AG04450 (cell line): ENCODE measurements at regions of chr2 and their contacts with region 1.

Region 1: GRCh38 chr2:166180951-166181812 is 53.4 kb upstream of the SCN1A start:
- DNase-seq: no peak
- H3K4me3 ChIP-seq: no peak overlapping the region
- H3K27ac ChIP-seq: no peak overlapping the region
- H3K27me3 ChIP-seq: no peaks in the 10 kb centered on the region
- CTCF ChIP-seq: peak; percentile 61

Region 2: GRCh38 chr2:165161510-165161909 is 1019.7 kb before region 1 on chr2:
- CTCF ChIA-PET with region 1: interaction called, 16 read pairs
- POLR2A ChIA-PET with region 1: no interaction called
- DNase-seq: peak; percentile 33
- H3K4me3 ChIP-seq: no peak overlapping the region
- H3K27ac ChIP-seq: no peak overlapping the region
- H3K27me3 ChIP-seq: no peaks in the 10 kb centered on the region
- CTCF ChIP-seq: no peak

Region 3: GRCh38 chr2:165911231-165911630 is 270.0 kb before region 1 on chr2:
- CTCF ChIA-PET with region 1: no interaction called
- POLR2A ChIA-PET with region 1: no interaction called
- DNase-seq: no peak
- H3K4me3 ChIP-seq: no peak overlapping the region
- H3K27ac ChIP-seq: no peak overlapping the region
- H3K27me3 ChIP-seq: no peaks in the 10 kb centered on the region
- CTCF ChIP-seq: no peak

Region 4: DNA sequence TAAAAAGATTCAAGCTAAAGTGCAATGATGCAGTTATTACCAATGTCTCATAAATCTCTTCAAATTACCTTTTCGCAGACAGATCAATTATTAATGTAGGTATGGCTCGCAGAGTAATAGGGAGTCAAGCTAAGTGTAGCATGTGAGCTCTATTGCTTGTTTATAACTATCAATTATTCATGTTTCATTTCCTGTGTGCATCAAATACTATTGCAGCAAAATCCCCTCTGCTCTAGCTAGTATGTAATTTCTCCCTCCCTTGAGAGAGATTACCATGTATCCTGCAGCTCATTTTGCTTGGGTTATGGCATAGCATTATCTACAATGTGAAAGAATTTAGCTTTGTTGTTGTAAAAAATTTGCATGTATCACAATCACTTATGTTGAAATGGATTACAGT is 12.2 kb after region 1 on chr2:
- CTCF ChIA-PET with region 1: interaction called, 26 read pairs
- POLR2A ChIA-PET with region 1: no interaction called
- DNase-seq: no peak
- H3K4me3 ChIP-seq: no peak overlapping the region
- H3K27ac ChIP-seq: no peak overlapping the region
- H3K27me3 ChIP-seq: no peaks in the 10 kb centered on the region
- CTCF ChIP-seq: no peak

Region 5: GRCh38 chr2:166384774-166385173 is 203.6 kb after region 1 on chr2:
- CTCF ChIA-PET with region 1: interaction called, 40 read pairs
- POLR2A ChIA-PET with region 1: no interaction called
- DNase-seq: no peak
- H3K4me3 ChIP-seq: no peak overlapping the region
- H3K27ac ChIP-seq: no peak overlapping the region
- H3K27me3 ChIP-seq: no peaks in the 10 kb centered on the region
- CTCF ChIP-seq: peak; percentile 50

Region 6: GRCh38 chr2:166410828-166411472 is 229.8 kb after region 1 on chr2:
- CTCF ChIA-PET with region 1: interaction called, 14 read pairs
- POLR2A ChIA-PET with region 1: no interaction called
- DNase-seq: peak; percentile 62
- H3K4me3 ChIP-seq: no peak overlapping the region; the same call in 1 of the 2 replicates
- H3K27ac ChIP-seq: peak overlapping the region; percentile 62
- H3K27me3 ChIP-seq: no peaks in the 10 kb centered on the region
- CTCF ChIP-seq: no peak

Region 7: GRCh38 chr2:166417669-166418068 is 236.5 kb after region 1 on chr2:
- CTCF ChIA-PET with region 1: interaction called, 16 read pairs
- POLR2A ChIA-PET with region 1: no interaction called
- DNase-seq: no peak
- H3K4me3 ChIP-seq: no peak overlapping the region
- H3K27ac ChIP-seq: no peak overlapping the region
- H3K27me3 ChIP-seq: no peaks in the 10 kb centered on the region
- CTCF ChIP-seq: no peak; the same call in 1 of the 2 replicates